ENCODE measurements at regions of chr18 and their contacts with region 1.

Region 1: DNA sequence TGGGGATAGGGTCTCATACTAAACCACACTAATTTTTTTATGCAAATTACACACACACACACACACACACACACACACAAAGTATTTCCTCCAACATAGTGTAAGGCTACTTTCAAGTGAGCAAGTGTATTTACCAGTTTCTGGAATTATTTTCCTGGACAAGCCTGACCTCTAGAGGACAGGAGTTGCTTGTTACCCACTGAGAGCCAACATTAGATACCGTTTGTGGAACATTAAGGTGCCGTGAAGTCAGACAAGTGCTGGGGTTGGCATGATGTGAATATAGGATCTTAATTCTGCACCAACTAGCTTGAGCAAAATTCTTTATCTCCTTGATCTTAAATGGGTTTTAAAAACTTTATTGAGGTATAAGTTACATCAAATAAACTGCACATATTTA is 39.3 kb upstream of the SERPINB2 start:
- DNase-seq: peak; percentile 37
- H3K4me3 ChIP-seq: no peak overlapping the region
- H3K27ac ChIP-seq: no peak overlapping the region
- H3K27me3 ChIP-seq: no peaks in the 10 kb centered on the region
- CTCF ChIP-seq: peak; percentile 74

Region 2: GRCh38 chr18:62838475-62839098 is 1009.6 kb before region 1 on chr18:
- CTCF ChIA-PET with region 1: no interaction called
- POLR2A ChIA-PET with region 1: no interaction called
- DNase-seq: no peak
- H3K4me3 ChIP-seq: no peak overlapping the region
- H3K27ac ChIP-seq: no peak overlapping the region
- H3K27me3 ChIP-seq: no peaks in the 10 kb centered on the region
- CTCF ChIP-seq: no peak

Region 3: GRCh38 chr18:63528863-63529492 is 319.2 kb before region 1 on chr18:
- CTCF ChIA-PET with region 1: interaction called, 12 read pairs
- POLR2A ChIA-PET with region 1: no interaction called
- DNase-seq: no peak
- H3K4me3 ChIP-seq: no peak overlapping the region
- H3K27ac ChIP-seq: no peak overlapping the region
- H3K27me3 ChIP-seq: no peaks in the 10 kb centered on the region
- CTCF ChIP-seq: no peak

Region 4: GRCh38 chr18:63859781-63860475 is 11.8 kb after region 1 on chr18:
- CTCF ChIA-PET with region 1: interaction called, 12 read pairs
- POLR2A ChIA-PET with region 1: no interaction called
- DNase-seq: no peak
- H3K4me3 ChIP-seq: no peak overlapping the region
- H3K27ac ChIP-seq: no peak overlapping the region
- H3K27me3 ChIP-seq: no peaks in the 10 kb centered on the region
- CTCF ChIP-seq: no peak

Region 5: DNA sequence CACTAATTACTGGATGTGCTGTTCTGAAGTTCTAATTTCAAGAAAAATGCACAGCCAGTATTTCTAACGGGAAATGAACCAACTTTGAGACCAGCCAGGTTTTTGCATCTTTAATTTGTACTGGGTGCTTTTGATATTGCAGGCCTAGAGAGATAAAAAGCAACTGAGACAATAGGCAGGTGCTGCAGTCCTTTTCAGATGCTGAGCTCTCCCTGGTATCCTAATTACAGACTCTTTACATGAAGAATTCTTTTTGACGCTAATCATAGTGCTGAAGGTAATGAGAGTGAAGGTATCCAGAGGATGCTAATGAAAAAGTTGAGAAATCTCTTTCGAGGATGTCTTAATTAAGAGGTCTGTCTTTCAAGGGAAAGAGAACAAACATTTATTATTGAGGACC is 206.9 kb after region 1 on chr18:
- CTCF ChIA-PET with region 1: no interaction called
- POLR2A ChIA-PET with region 1: no interaction called
- DNase-seq: no peak
- H3K4me3 ChIP-seq: no peak overlapping the region
- H3K27ac ChIP-seq: no peak overlapping the region
- H3K27me3 ChIP-seq: no peaks in the 10 kb centered on the region
- CTCF ChIP-seq: no peak

Measured in AG04450 (cell line).